Vagina (tissue), 2 donors: ENCODE measurements at regions of chr5 and their contacts with region 1.

Region 1: DNA sequence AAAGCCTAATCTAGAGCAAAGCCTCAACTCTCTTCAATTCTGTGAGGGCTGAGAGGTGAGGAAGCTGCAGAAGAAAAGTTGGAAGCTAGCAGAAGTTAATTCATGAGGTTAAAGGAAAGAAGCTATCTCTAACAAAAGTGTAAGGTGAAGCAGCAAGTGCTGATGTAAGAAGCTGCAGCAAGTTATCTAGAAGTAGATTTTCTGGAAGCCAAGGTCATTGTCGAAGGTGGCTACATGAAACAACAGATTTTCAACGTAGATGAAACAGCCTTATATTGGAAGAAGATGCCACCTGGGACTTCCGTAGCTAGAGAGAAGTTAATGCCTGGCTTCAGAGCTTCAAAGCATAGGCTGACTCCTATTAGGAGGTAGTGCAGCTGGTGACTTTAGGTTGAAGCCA is 42.0 kb downstream of the SREK1 start:
- DNase-seq: no peak
- H3K4me3 ChIP-seq: no peak overlapping the region
- H3K27ac ChIP-seq: no peak overlapping the region
- H3K4me1 ChIP-seq: no peaks in the 10 kb centered on the region
- H3K27me3 ChIP-seq: no peaks in the 10 kb centered on the region
- CTCF ChIP-seq: no peak
- POLR2A ChIP-seq: no peak

Region 2: DNA sequence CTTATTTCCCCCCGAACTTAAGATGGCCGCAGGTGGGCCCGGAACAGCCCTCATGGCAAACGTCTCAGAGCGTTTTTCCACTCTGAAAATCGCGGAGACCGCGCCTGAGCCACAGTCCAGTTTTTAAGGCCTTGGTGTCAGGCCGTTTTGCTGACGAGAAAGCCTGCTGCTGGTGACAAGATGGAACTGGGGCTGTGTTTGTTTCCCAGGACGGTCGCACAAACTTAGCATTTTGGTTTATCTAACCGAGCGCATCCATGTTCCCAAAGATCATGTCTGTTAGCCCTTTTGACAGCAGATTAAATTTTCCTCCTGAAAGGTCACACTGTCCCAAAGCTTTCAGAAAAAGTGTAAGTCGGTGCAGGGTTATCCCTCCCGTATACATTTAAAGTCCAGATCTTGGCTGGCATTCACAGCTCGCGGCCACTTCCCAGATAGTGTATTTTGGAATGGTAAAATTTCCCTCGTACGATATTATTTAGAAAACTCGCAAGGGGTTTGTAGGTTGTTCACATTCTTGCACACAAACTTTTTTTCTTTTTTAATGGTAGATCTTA is 41.2 kb before region 1 on chr5:
- intact Hi-C with region 1: no loop called
- DNase-seq: peak in 1 of 2 donors; percentile 89
- H3K4me3 ChIP-seq: peak overlapping the region; percentile 83 to 96
- H3K27ac ChIP-seq: peak overlapping the region; percentile 99
- H3K4me1 ChIP-seq: peaks cover 38% of the 10 kb centered on the region
- H3K27me3 ChIP-seq: no peaks in the 10 kb centered on the region
- CTCF ChIP-seq: no peak
- POLR2A ChIP-seq: no peak

Region 3: GRCh38 chr5:66621146-66621545 is 435.0 kb after region 1 on chr5:
- intact Hi-C with region 1: no loop called
- DNase-seq: no peak
- H3K4me3 ChIP-seq: no peak overlapping the region
- H3K27ac ChIP-seq: no peak overlapping the region
- H3K4me1 ChIP-seq: no peaks in the 10 kb centered on the region
- H3K27me3 ChIP-seq: no peaks in the 10 kb centered on the region
- CTCF ChIP-seq: no peak
- POLR2A ChIP-seq: no peak

Region 4: DNA sequence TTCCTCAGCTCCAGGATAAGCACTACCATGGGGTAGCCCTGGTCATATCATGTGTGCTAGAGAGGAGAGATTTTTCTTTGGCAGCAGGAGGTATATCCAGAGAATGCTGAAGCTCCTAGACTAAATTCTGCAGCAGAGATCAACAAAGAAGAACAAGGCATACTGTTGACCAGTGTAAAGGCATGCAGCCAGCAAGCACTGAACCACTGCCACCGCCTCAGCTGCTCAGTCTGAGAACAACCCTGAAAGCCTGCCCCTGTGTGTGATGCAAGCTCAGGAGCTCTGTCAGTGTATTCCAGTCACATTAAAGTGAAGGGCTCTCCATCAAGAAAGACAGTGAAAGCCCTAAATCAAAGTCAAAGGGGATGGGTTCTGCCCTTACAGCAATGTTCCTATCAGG is 1450.0 kb after region 1 on chr5:
- intact Hi-C with region 1: loop called (anchors 5 kb)
- DNase-seq: no peak
- H3K4me3 ChIP-seq: no peak overlapping the region
- H3K27ac ChIP-seq: no peak overlapping the region
- H3K4me1 ChIP-seq: peaks cover 20% of the 10 kb centered on the region
- H3K27me3 ChIP-seq: no peaks in the 10 kb centered on the region
- CTCF ChIP-seq: no peak
- POLR2A ChIP-seq: no peak